ENCODE measurements at regions of chr11 and their contacts with region 1.

Region 1: DNA sequence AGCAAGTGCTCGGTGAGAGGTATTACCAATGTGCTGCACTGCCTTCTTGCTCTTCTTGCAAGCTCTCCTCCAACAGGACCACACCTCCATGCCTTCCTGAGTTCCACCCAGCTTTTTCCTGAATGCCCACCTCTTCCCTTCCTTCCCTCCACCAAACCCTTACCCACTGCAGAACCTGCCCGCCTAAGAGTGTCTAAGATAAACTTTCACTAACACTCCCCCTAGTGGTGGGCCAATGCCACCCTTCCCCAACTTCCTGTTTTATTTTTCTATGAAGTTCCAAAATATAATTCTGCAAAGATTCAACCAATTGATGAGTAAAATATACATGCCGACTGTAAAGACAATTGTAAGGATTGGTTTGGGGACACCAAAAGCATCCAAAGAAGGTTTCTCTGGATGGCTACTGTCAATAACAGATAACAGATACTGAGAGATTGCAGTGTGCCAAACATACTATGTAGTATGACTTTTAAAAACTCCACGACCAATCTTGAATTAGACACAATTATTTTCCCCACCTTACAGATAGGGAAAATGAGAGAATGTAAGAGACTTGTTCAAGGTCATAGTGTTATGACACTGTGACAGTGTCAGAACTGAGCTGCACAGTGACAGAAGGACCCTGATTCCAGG is 38.6 kb upstream of the BMAL1 start:
- H3K4me3 ChIP-seq: no peak overlapping the region
- H3K27ac ChIP-seq: no peak overlapping the region
- H3K4me1 ChIP-seq: no peaks in the 10 kb centered on the region
- CTCF ChIP-seq: peak; percentile 32; the same call in 1 of the 2 replicates

Region 2: DNA sequence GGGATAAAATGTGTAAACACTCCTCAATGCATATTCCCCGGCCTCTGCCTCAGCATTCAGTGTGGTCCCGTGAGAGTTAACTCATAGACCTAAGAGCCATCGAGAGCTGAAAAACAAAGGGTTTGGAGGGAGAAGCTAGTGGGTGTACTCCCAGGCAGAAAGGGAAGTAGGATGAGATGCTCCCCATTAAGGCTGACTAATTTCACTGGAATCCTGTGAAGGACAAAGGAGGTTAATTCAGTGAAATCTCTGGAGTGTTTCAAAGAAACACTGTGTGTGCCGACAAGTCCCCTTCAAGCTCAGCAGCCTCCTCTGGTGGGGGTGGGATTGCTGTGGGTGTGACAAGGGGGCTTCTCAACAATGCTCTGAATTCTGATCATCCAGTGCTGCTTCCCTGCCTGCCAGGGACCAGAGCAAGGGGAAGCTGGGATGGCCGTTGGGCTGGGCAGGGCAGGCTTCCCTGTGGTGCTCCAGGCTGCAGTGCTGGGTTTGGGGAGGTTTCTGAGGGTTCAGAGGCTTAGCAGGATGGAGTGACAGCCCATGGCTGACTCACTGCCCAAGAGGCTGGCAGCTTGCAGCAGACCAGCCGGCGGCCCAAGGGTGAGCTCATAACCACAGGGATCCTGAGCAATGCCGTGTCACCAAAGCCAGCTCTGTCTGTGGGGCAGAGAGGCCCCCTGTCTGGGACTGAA is 22.8 kb before region 1 on chr11:
- CTCF ChIA-PET with region 1: interaction called, 76 read pairs
- POLR2A ChIA-PET with region 1: no interaction called
- H3K4me3 ChIP-seq: peak overlapping the region; percentile 14
- H3K27ac ChIP-seq: no peak overlapping the region
- H3K4me1 ChIP-seq: no peaks in the 10 kb centered on the region
- CTCF ChIP-seq: no peak

Region 3: DNA sequence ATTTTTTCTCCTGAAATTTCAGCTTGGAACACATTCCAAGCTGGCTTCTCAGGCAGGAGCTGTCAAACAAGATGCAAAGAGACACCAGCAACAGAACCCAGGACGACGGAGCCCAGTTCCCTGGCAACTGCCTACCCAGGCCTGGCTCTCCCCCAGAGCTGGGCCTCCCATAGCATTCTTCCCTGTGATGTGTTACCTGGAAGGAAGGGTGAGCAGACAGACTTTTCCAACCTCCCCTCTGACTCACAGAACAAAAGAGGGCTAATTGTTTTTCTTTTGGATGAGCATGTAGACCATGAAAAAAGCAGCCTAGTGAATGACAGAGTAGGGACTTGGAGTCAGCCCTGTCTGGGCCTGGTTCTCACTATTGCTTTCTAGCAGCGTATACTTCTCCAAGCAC is 16.7 kb before region 1 on chr11:
- CTCF ChIA-PET with region 1: interaction called, 18 read pairs
- POLR2A ChIA-PET with region 1: interaction called, 3 read pairs
- H3K4me3 ChIP-seq: no peak overlapping the region
- H3K27ac ChIP-seq: no peak overlapping the region
- H3K4me1 ChIP-seq: no peaks in the 10 kb centered on the region
- CTCF ChIP-seq: no peak

Region 4: GRCh38 chr11:13249996-13250395 is 11.0 kb after region 1 on chr11:
- CTCF ChIA-PET with region 1: interaction called, 23 read pairs
- POLR2A ChIA-PET with region 1: no interaction called
- H3K4me3 ChIP-seq: no peak overlapping the region
- H3K27ac ChIP-seq: no peak overlapping the region
- H3K4me1 ChIP-seq: no peaks in the 10 kb centered on the region
- CTCF ChIP-seq: no peak

Region 5: GRCh38 chr11:13256216-13256615 is 17.2 kb after region 1 on chr11:
- CTCF ChIA-PET with region 1: interaction called, 23 read pairs
- POLR2A ChIA-PET with region 1: no interaction called
- H3K4me3 ChIP-seq: no peak overlapping the region
- H3K27ac ChIP-seq: no peak overlapping the region
- H3K4me1 ChIP-seq: no peaks in the 10 kb centered on the region
- CTCF ChIP-seq: no peak

Region 6: DNA sequence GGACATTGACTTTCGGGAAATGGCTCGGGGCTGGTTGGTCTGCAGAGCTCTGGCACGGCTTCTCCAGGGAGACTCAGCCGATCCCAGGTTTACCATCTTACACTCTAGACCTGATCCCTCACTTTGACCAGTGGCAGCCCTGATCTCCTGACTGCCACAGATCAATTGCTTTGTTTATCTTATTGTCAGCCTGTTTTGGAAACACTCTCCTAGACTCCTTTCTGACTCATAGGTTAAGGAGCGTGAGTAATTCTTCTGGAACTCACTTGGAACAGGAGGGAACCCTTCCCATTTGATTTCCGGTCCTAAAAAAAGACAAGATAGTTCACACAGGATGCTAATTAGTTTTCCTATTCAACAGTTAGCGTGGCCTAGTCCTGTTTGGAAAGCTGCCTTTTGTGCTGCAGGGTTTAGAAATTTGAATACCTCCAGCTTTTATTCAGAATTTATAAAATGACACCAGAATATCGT is 22.6 kb after region 1 on chr11:
- CTCF ChIA-PET with region 1: interaction called, 23 read pairs
- POLR2A ChIA-PET with region 1: no interaction called
- H3K4me3 ChIP-seq: no peak overlapping the region
- H3K27ac ChIP-seq: no peak overlapping the region
- H3K4me1 ChIP-seq: no peaks in the 10 kb centered on the region
- CTCF ChIP-seq: no peak

Region 7: GRCh38 chr11:13316528-13316961 is 77.5 kb after region 1 on chr11:
- CTCF ChIA-PET with region 1: no interaction called
- POLR2A ChIA-PET with region 1: no interaction called
- H3K4me3 ChIP-seq: no peak overlapping the region
- H3K27ac ChIP-seq: no peak overlapping the region
- H3K4me1 ChIP-seq: no peaks in the 10 kb centered on the region
- CTCF ChIP-seq: no peak

Region 8: GRCh38 chr11:13335319-13335718 is 96.3 kb after region 1 on chr11:
- CTCF ChIA-PET with region 1: interaction called, 12 read pairs
- POLR2A ChIA-PET with region 1: no interaction called
- H3K4me3 ChIP-seq: no peak overlapping the region
- H3K27ac ChIP-seq: no peak overlapping the region
- H3K4me1 ChIP-seq: no peaks in the 10 kb centered on the region
- CTCF ChIP-seq: no peak

Region 9: GRCh38 chr11:13391217-13391616 is 152.2 kb after region 1 on chr11:
- CTCF ChIA-PET with region 1: no interaction called
- POLR2A ChIA-PET with region 1: no interaction called
- H3K4me3 ChIP-seq: no peak overlapping the region
- H3K27ac ChIP-seq: no peak overlapping the region
- H3K4me1 ChIP-seq: no peaks in the 10 kb centered on the region
- CTCF ChIP-seq: no peak